Activated T-helper 1 cell treated with anti-CD3 and anti-CD28 coated beads, Interleukin-12 subunit alpha, Interleukin-12 subunit beta, Interleukin-2, Interleukin-4 antibody, amounts not matched to agents 30 ng/mL and 10 ng/mL and 1 ng/mL, durations not matched to agents 14 hours and 24 hours and 36 hours (primary cell): ENCODE measurements at regions of chr10 and their contacts with region 1.

Region 1: GRCh38 chr10:30986053-30986555 is 45.6 kb downstream of the ZNF438 start:
- DNase-seq: no peak
- H3K4me3 Mint-ChIP-seq: peak overlapping the region; percentile 5
- H3K27ac Mint-ChIP-seq: peak overlapping the region; percentile 85
- H3K4me1 Mint-ChIP-seq: peaks cover 13% of the 10 kb centered on the region
- H3K27me3 Mint-ChIP-seq: no peaks in the 10 kb centered on the region

Region 2: GRCh38 chr10:30687698-30688219 is 298.3 kb before region 1 on chr10:
- intact Hi-C with region 1: loop called (anchors 5 kb)
- DNase-seq: peak; percentile 63
- H3K4me3 Mint-ChIP-seq: no peak overlapping the region
- H3K27ac Mint-ChIP-seq: no peak overlapping the region
- H3K4me1 Mint-ChIP-seq: peaks cover 44% of the 10 kb centered on the region
- H3K27me3 Mint-ChIP-seq: peaks cover 5% of the 10 kb centered on the region

Region 3: DNA sequence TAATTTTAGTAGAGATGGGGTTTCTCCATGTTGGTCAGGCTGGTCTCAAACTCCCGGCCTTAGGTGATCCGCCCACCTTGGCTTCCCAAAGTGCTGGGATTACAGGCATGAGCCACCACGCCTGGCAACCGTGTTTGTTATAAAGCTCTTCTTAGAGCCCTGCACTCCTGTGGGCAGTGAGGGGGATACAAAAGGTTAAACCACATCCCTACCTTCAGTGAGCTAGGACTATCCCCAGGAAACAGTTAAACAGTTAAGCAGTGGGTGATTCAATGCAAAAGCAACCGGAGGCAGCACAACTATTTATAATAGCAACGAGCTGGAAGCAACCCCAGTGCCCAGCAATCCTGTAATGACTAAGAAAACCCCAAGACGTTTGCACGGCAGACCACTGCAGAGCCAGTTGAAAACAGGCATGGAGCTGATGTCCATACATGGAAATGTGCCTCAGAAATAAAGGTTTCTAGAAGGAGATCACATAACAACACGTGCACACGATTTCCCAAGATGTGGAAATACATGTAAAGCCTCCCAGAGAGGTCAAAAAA is 249.3 kb before region 1 on chr10:
- intact Hi-C with region 1: loop called (anchors 5 kb)
- DNase-seq: peak; percentile 21
- H3K4me3 Mint-ChIP-seq: no peak overlapping the region
- H3K27ac Mint-ChIP-seq: peak overlapping the region; percentile 84
- H3K4me1 Mint-ChIP-seq: peaks cover 24% of the 10 kb centered on the region
- H3K27me3 Mint-ChIP-seq: no peaks in the 10 kb centered on the region

Region 4: DNA sequence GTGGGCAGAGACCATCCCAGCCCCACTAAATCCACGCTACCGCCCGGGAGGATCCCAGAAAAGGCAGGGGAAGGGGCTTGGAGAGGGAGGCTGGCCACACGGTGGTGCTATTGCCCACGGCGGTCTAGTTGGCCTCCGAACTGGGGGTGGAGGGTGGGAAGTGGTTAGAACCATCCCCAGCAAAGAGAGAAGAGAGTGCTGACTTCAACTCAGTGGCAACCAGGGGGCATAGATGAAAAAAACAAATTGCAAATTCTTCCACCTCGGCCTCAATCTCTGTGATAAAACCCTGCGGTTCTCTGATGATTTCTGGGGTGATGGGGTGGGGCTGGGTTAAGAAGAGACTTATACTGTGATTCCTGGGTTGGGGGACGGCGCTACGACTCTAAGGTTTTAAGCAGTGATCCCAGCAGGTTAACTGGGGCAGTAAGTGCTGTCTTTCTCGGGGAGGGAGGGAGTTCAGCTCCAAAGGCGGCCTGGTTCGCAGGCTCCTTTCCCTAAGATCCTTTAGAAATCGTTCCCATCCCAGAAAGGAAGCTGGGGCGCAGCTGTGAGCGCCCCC is 202.1 kb before region 1 on chr10:
- intact Hi-C with region 1: loop called (anchors 2 kb)
- DNase-seq: peak; percentile 67
- H3K4me3 Mint-ChIP-seq: peak overlapping the region; percentile 79
- H3K27ac Mint-ChIP-seq: peak overlapping the region; percentile 75
- H3K4me1 Mint-ChIP-seq: peaks cover 29% of the 10 kb centered on the region
- H3K27me3 Mint-ChIP-seq: peaks cover 7% of the 10 kb centered on the region

Region 5: DNA sequence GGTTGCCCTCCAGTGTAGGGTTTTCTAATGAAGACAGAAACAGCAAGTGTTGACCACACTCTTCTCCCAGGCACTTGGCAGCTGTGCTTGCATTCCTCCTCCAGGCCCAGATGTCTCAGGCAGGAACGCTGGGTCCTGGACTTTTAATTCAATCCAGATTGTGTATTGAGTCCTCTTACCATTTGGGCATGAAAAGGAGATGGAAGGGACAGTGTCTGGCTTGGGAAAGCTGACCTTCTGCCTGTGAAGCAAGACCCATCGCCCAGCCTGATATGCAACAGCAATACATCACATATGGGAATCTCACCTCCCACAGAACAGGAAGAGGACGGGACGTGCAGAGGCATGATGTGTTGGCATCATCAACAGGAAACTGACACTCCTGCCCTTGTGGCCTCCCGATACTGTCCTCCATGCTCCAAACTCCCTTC is 182.2 kb before region 1 on chr10:
- intact Hi-C with region 1: no loop called
- DNase-seq: no peak
- H3K4me3 Mint-ChIP-seq: no peak overlapping the region
- H3K27ac Mint-ChIP-seq: no peak overlapping the region
- H3K4me1 Mint-ChIP-seq: peaks cover 13% of the 10 kb centered on the region
- H3K27me3 Mint-ChIP-seq: no peaks in the 10 kb centered on the region

Region 6: DNA sequence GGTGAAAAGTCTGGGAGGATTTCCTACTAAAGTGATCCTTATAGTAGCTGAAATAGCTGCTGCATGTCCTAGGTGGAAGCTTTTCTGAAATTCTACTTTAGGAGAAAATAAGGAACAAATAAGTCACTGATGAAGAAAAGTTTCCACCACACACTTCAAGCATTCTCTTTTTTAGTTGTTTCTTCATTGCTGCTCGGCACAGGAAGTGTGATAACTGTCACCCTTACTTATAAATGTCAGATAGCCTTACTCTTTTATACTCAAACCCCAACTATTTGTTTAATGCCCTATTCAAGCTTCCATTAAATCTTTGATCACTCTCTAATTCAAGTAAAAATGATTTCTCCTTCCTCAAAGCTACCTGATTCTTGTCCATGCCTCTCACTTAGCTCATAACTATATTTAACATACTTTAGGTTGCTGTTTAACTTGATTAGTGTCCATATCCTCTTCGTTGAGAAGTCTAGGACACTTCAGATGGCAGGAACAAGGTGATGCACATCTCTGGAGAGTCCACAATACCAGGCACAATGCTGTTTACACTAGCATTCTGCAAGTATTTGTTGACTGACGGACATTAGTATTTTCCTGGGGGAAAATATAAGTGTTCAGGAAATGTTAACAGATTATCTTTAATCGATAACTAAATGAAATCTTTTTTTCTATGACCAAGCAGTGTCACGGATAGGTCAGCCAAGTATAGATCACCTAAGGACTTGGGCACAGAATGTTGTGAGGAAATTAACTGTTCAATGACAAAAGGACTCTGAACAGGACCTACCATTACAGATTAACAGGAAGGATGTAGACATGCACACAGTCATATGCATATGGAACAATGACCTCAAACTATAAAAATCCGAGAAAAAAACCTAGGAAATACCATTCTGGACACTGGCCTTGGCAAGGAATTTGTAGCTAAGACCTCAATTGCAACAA is 21.8 kb before region 1 on chr10:
- intact Hi-C with region 1: loop called (anchors 1 kb)
- DNase-seq: no peak
- H3K4me3 Mint-ChIP-seq: peak overlapping the region; percentile 28
- H3K27ac Mint-ChIP-seq: peak overlapping the region; percentile 91
- H3K4me1 Mint-ChIP-seq: peaks cover 15% of the 10 kb centered on the region
- H3K27me3 Mint-ChIP-seq: no peaks in the 10 kb centered on the region

Region 7: DNA sequence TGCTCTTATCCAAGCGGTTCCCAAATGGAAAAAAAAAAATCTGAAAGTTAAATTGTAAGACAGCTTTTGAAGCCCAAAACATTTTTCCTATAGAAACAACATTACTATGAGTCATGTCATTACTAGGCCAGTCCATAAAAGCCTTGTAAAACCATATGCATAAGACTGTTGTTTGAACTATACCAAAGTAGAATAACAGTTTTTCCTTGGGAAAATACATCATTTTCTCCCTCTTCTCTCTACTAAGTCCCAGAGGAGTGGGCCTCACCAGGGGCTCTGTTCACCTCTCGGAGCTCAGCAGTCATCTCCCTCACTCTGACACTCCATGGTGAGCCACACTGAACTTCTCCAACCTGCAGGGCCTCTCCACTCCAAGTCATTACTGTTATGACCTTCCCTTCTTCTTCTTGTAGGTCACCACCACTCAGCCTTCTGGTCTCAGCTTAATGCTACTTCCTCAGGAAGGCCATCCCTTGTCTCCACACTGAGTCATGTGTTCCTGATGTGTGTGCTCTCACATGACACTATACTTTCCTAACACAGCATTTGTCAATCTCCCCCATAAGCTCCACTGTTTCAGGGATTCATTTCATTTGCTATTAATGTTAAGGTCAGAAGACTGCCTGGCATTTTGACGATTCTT is 13.1 kb after region 1 on chr10:
- intact Hi-C with region 1: loop called (anchors 1 kb)
- DNase-seq: no peak
- H3K4me3 Mint-ChIP-seq: peak overlapping the region; percentile 77
- H3K27ac Mint-ChIP-seq: peak overlapping the region; percentile 88
- H3K4me1 Mint-ChIP-seq: peaks cover 35% of the 10 kb centered on the region
- H3K27me3 Mint-ChIP-seq: no peaks in the 10 kb centered on the region